Activated CD4-positive, alpha-beta T cell treated with anti-CD3 and anti-CD28 coated beads for 36 hours (primary cell): ENCODE measurements at regions of chr7 and their contacts with region 1.

Region 1: GRCh38 chr7:774161-775109 is 47.4 kb upstream of the PRKAR1B start:
- DNase-seq: peak; percentile 85
- ATAC-seq: peak; percentile 93
- H3K4me3 Mint-ChIP-seq: no peak overlapping the region
- H3K27ac Mint-ChIP-seq: no peak overlapping the region
- H3K4me1 Mint-ChIP-seq: no peaks in the 10 kb centered on the region
- H3K27me3 Mint-ChIP-seq: no peaks in the 10 kb centered on the region

Region 2: GRCh38 chr7:322111-322671 is 452.2 kb before region 1 on chr7:
- CTCF ChIA-PET with region 1: interaction called, 5 read pairs
- POLR2A ChIA-PET with region 1: no interaction called
- intact Hi-C with region 1: loop called (anchors 1 kb)
- DNase-seq: peak; percentile 90
- ATAC-seq: peak; percentile 99
- H3K4me3 Mint-ChIP-seq: no peak overlapping the region
- H3K27ac Mint-ChIP-seq: no peak overlapping the region
- H3K4me1 Mint-ChIP-seq: no peaks in the 10 kb centered on the region
- H3K27me3 Mint-ChIP-seq: peaks cover 14% of the 10 kb centered on the region

Region 3: DNA sequence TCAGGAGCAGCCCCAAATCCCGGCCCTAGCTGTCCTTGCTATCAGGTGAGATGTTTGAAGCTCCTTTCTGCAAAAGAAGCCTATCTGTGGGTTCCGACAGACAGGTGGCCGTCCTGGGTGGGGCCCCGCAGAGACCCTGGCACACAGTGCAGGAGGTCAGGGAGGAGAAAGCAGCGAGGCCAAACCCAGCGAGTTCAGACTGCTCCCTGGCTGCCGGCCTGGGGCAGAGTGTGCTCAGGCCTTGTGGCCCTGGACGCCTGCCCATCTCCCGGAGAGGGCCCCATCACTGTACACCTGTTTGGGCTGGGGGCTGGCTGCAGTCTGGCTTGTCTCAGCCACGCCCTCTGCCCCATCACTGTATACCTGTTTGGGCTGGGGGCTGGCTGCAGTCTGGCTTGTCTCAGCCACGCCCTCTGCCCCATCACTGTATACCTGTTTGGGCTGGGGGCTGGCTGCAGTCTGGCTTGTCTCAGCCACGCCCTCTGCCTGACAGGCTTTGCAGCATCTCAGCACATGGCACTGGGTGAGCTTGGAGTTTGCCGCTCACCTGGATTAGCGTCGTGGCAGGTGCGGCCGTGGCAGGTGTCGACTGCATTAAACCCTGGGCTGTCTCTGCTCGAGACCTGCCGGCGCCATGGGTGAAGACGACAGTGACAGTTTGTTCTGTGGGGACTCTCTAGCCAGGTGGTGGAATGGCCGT is 35.5 kb before region 1 on chr7:
- CTCF ChIA-PET with region 1: no interaction called
- POLR2A ChIA-PET with region 1: no interaction called
- intact Hi-C with region 1: no loop called
- DNase-seq: no peak
- ATAC-seq: no peak
- H3K4me3 Mint-ChIP-seq: no peak overlapping the region
- H3K27ac Mint-ChIP-seq: no peak overlapping the region
- H3K4me1 Mint-ChIP-seq: no peaks in the 10 kb centered on the region
- H3K27me3 Mint-ChIP-seq: no peaks in the 10 kb centered on the region